GM12878 (cell line): ENCODE measurements at regions of chr13 and their contacts with region 1.

Region 1: DNA sequence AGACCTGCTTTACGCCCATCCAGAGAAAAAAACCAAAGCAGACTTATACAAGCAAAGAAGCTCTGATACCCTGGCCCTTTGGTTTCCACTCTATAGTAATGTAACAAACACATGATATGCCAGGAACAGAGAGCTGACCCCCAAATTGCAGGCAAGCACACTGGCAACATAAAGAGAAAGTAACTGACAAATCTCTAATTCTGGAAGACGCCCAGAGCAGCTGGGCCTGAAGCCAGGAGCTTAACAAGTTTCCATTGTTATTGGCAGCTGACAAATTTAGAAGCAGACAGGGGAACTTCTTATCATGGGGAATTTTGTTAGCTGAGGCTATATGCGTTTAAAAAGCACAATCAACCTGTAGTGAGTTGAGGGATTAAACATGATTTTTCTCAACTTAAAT is 158.0 kb downstream of the DLEU7 start:
- DNase-seq: no peak
- ATAC-seq: peak; percentile 58
- H3K4me3 ChIP-seq: no peak overlapping the region
- H3K27ac ChIP-seq: no peak overlapping the region
- H3K4me1 ChIP-seq: peaks cover 6% of the 10 kb centered on the region
- H3K27me3 ChIP-seq: no peaks in the 10 kb centered on the region
- CTCF ChIP-seq: no peak
- EP300 ChIP-seq: no peak
- POLR2A ChIP-seq: no peak
- RAD21 ChIP-seq: no peak

Region 2: DNA sequence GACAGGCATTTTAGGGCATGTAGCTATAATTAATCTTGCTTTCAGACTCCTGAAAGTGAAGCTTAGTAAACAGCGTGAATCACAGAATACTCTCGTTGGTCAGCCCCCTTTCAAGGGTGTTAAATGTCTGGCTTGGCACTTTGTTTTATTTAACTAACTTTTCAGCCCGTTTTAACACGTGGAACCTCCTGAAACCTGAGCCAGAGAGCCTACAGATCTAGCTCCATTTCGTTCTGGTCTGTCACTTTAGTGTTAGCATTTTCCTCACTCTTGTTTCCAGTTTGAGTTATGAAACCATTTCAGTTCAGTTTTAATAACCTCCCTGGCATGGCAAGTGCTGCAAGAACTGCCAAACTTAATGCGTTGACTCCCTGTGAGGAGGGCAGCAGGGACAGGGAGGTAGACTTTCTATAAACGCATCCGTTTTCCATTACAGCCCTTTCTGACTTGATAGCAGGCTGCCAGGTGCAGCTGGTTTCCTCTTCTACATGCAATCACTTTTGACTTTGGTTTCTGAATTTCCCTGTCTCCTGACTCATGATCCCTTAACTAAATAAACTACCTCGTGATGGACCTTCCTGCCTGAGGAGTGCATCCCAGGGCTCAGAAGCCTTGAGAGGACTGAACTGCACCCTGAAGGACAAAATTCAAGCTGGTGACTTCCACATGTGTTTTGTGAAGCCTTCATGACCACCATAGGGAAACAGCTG is 34.7 kb before region 1 on chr13:
- CTCF ChIA-PET with region 1: no interaction called
- POLR2A ChIA-PET with region 1: no interaction called
- RAD21 ChIA-PET with region 1: no interaction called
- SMC1A ChIA-PET with region 1: interaction called, 10 read pairs
- in situ Hi-C with region 1: no loop called
- intact Hi-C with region 1: no loop called
- DNase-seq: no peak
- ATAC-seq: peak; percentile 35
- H3K4me3 ChIP-seq: no peak overlapping the region
- H3K27ac ChIP-seq: no peak overlapping the region
- H3K4me1 ChIP-seq: no peaks in the 10 kb centered on the region
- H3K27me3 ChIP-seq: no peaks in the 10 kb centered on the region
- CTCF ChIP-seq: no peak
- EP300 ChIP-seq: no peak
- POLR2A ChIP-seq: no peak
- RAD21 ChIP-seq: no peak